A673 (cell line): ENCODE measurements at regions of chr15 and their contacts with region 1.

Region 1: GRCh38 chr15:83653639-83654378 is at the start of gene ADAMTSL3:
- DNase-seq: peak; percentile 74
- H3K4me3 ChIP-seq: peak within 1 kb of the TSS; percentile 36
- H3K27ac ChIP-seq: no peak within 1 kb of the TSS
- H3K4me1 ChIP-seq: peaks cover 8% of the 10 kb centered on the region
- H3K27me3 ChIP-seq: peaks cover 26% of the 10 kb centered on the region
- CTCF ChIP-seq: no peak
- total RNA-seq, gene ADAMTSL3: 0.95 and 2.3 TPM in 2 replicates

Region 2: GRCh38 chr15:84035399-84035766 is 381.6 kb after region 1 on chr15:
- CTCF ChIA-PET with region 1: no interaction called
- POLR2A ChIA-PET with region 1: no interaction called
- intact Hi-C with region 1: loop called (anchors 10 kb)
- DNase-seq: peak; percentile 59
- H3K4me3 ChIP-seq: no peak overlapping the region
- H3K27ac ChIP-seq: no peak overlapping the region
- H3K4me1 ChIP-seq: no peaks in the 10 kb centered on the region
- H3K27me3 ChIP-seq: peaks cover 7% of the 10 kb centered on the region
- CTCF ChIP-seq: peak; percentile 57

Region 3: GRCh38 chr15:84057714-84058331 is 404.0 kb after region 1 on chr15:
- CTCF ChIA-PET with region 1: no interaction called
- POLR2A ChIA-PET with region 1: no interaction called
- intact Hi-C with region 1: no loop called
- DNase-seq: no peak
- H3K4me3 ChIP-seq: no peak overlapping the region
- H3K27ac ChIP-seq: no peak overlapping the region
- H3K4me1 ChIP-seq: no peaks in the 10 kb centered on the region
- H3K27me3 ChIP-seq: no peaks in the 10 kb centered on the region
- CTCF ChIP-seq: no peak

Region 4: DNA sequence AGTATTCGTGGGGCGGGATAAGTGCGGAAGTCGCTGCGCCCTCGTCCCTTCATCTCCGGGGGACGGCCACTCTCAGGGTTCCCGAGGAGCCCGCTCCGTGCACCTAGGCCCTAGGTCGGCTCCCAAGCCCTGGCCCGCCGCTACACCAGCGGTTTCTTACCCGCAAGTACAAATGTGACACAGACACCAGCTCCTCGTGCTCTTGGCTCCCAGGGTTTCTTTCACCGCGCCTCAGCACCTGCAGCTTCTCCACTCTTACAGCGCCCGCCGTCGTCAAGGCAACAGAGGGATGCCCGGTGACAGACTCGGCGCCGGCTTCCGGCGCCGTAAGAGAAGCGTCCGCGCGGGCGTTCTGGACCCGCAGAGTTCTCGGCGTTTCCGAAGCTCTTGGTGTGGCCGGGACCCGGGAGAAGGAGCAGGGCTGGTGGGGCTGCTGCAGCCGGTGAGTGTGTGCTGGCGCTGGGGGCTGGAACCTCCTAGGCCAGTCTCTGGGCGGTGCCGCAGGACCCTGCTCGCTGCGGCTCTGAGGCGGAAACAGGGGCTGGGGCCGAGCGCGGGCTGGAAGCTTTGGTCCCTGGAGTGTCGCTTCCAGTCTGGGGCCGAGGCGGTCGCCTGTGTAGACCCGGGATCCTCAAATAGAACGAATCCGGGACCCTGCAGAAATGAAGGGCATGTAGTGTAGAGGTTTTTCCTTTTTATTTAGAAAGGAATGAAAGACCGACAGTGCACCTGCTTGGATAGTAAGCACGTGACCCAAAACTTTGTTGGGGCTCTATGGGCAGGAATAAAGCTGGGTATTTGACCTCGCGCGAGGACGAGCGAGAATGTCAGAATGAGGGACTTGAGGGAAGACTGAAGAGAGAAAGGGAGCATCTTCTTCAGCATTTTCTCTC is 426.3 kb after region 1 on chr15:
- CTCF ChIA-PET with region 1: no interaction called
- POLR2A ChIA-PET with region 1: no interaction called
- intact Hi-C with region 1: no loop called
- DNase-seq: no peak
- H3K4me3 ChIP-seq: peak overlapping the region; percentile 27
- H3K27ac ChIP-seq: no peak overlapping the region
- H3K4me1 ChIP-seq: peaks cover 10% of the 10 kb centered on the region
- H3K27me3 ChIP-seq: peaks cover 36% of the 10 kb centered on the region
- CTCF ChIP-seq: no peak